GM10248 (cell line): ENCODE measurements at regions of chr21 and their contacts with region 1.

Region 1: GRCh38 chr21:46144464-46145070 is 10.8 kb downstream of the FTCD start:
- DNase-seq: no peak
- CTCF ChIP-seq: no peak

Region 2: GRCh38 chr21:45963232-45963570 is 181.4 kb before region 1 on chr21:
- CTCF ChIA-PET with region 1: no interaction called
- POLR2A ChIA-PET with region 1: no interaction called
- DNase-seq: no peak
- CTCF ChIP-seq: no peak

Region 3: DNA sequence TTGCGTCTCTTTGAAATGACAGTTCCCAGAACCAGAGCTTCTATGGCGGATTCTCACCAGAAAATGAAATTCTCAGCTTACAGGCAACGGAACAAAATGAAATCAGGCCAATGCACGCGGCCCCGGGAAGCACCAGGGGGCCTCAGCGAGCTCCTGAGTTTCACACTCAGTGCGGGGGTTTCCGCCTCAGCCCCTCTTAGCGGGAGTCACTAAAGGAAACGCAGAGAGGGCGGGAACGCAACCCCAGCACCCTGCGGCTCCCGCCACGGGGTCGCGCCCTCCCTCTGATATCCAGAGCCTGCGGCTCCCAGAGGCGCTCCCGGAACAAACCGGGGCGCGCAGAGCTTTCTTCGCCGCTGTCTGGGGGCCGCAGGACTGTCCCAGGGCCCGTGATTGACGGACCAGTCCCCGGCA is 170.9 kb before region 1 on chr21:
- CTCF ChIA-PET with region 1: interaction called, 11 read pairs
- POLR2A ChIA-PET with region 1: no interaction called
- DNase-seq: peak; percentile 84
- CTCF ChIP-seq: peak; percentile 75

Region 4: GRCh38 chr21:46130831-46131587 is 13.6 kb before region 1 on chr21:
- CTCF ChIA-PET with region 1: interaction called, 11 read pairs
- POLR2A ChIA-PET with region 1: no interaction called
- DNase-seq: no peak
- CTCF ChIP-seq: no peak

Region 5: DNA sequence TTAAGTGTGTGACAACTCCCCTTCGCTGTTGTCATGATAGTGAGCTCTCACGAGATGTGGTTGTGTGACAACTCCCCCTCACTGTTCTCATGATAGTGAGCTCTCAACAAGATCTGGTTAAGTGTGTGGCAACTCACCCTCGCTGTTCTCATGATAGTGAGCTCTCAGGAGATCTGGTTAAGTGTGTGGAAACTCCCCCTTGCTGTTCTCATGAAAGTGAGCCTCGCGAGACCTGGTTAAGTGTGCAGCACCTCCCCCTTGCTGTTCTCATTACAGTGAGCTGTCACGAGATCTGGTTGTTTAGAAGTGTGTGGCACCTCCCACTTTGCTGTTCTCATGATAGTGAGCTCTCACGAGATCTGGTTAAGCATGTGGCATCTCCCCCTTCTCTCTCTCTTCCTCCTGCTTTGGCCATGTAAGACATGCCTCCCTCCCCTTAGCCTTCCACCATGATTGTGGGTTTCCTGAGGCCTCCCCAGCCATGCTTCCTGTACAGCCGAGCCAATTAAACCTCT is 109.1 kb after region 1 on chr21:
- CTCF ChIA-PET with region 1: interaction called, 16 read pairs
- POLR2A ChIA-PET with region 1: interaction called, 3 read pairs
- DNase-seq: peak; percentile 47
- CTCF ChIP-seq: no peak